ENCODE measurements at regions of chr13 and their contacts with region 1.

Region 1: DNA sequence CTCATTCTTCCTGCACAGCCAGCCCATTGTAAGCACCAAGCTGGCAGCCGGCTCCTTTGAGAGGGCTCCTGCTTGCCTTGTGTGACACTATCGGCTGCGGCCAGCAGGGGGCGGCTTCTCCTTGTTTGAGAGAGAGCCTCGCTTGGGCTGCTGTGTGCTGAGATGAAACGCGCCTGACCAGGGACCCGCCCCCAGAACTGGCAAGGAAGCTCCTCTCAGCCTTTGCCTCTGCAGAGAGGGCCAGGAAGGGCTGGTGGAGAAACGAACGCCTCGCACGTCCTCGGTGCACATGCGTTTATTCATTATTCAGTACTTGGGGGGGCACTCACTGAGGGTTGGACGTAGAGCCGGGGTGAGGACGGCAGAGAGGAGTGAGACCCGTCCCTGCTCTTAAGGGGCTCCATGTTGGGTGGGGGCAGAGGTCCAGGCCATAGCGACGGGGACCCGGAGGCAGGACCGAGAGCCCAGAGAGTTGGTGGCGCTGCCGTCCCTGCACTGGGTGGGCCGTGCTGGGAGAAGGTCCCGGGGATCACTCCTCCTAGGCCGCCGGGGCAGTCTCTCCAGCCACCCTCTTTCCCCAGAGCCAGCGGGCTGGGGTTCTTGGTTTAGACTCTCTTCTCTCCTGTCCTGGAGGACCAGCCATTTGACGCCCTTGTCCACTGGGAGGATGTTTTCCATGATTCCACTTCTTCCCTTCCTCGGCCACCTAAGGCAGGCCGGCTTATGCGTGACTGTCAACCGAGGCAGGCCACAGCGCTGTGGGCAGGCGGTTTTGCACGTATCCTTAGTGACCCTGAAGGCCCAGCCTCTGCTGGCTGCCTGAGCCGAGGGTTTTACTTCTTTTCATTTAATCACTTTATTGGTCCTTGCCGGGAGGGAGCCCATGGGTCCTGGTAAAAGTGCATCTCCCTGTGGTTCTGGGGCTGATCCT is 174.5 kb downstream of the KATNAL1 start:
- DNase-seq: peak; percentile 98
- H3K4me3 ChIP-seq: no peak overlapping the region
- H3K27ac ChIP-seq: peak overlapping the region; percentile 62
- H3K4me1 ChIP-seq: peaks cover 11% of the 10 kb centered on the region
- H3K27me3 ChIP-seq: no peaks in the 10 kb centered on the region
- CTCF ChIP-seq: peak; percentile 97

Region 2: GRCh38 chr13:30114571-30115256 is 18.2 kb before region 1 on chr13:
- CTCF ChIA-PET with region 1: interaction called, 11 read pairs
- POLR2A ChIA-PET with region 1: no interaction called
- intact Hi-C with region 1: no loop called
- DNase-seq: peak; percentile 91
- H3K4me3 ChIP-seq: peak overlapping the region; percentile 63
- H3K27ac ChIP-seq: peak overlapping the region; percentile 65
- H3K4me1 ChIP-seq: peaks cover 33% of the 10 kb centered on the region
- H3K27me3 ChIP-seq: no peaks in the 10 kb centered on the region
- CTCF ChIP-seq: peak; percentile 94

Region 3: GRCh38 chr13:30408319-30409101 is 275.6 kb after region 1 on chr13:
- CTCF ChIA-PET with region 1: interaction called, 11 read pairs
- POLR2A ChIA-PET with region 1: interaction called, 3 read pairs
- intact Hi-C with region 1: loop called (anchors 5 kb)
- DNase-seq: no peak
- H3K4me3 ChIP-seq: no peak overlapping the region
- H3K27ac ChIP-seq: peak overlapping the region; percentile 97
- H3K4me1 ChIP-seq: peaks cover 67% of the 10 kb centered on the region
- H3K27me3 ChIP-seq: no peaks in the 10 kb centered on the region
- CTCF ChIP-seq: no peak

Region 4: GRCh38 chr13:30453727-30454126 is 320.8 kb after region 1 on chr13:
- CTCF ChIA-PET with region 1: no interaction called
- POLR2A ChIA-PET with region 1: no interaction called
- intact Hi-C with region 1: loop called (anchors 2 kb)
- DNase-seq: peak; percentile 52
- H3K4me3 ChIP-seq: no peak overlapping the region
- H3K27ac ChIP-seq: no peak overlapping the region
- H3K4me1 ChIP-seq: peaks cover 13% of the 10 kb centered on the region
- H3K27me3 ChIP-seq: no peaks in the 10 kb centered on the region
- CTCF ChIP-seq: peak; percentile 38

Region 5: GRCh38 chr13:30572859-30573275 is 440.0 kb after region 1 on chr13:
- CTCF ChIA-PET with region 1: no interaction called
- POLR2A ChIA-PET with region 1: no interaction called
- intact Hi-C with region 1: loop called (anchors 5 kb)
- DNase-seq: peak; percentile 71
- H3K4me3 ChIP-seq: peak overlapping the region; percentile 38
- H3K27ac ChIP-seq: peak overlapping the region; percentile 83
- H3K4me1 ChIP-seq: peaks cover 48% of the 10 kb centered on the region
- H3K27me3 ChIP-seq: no peaks in the 10 kb centered on the region
- CTCF ChIP-seq: peak; percentile 54

Region 6: DNA sequence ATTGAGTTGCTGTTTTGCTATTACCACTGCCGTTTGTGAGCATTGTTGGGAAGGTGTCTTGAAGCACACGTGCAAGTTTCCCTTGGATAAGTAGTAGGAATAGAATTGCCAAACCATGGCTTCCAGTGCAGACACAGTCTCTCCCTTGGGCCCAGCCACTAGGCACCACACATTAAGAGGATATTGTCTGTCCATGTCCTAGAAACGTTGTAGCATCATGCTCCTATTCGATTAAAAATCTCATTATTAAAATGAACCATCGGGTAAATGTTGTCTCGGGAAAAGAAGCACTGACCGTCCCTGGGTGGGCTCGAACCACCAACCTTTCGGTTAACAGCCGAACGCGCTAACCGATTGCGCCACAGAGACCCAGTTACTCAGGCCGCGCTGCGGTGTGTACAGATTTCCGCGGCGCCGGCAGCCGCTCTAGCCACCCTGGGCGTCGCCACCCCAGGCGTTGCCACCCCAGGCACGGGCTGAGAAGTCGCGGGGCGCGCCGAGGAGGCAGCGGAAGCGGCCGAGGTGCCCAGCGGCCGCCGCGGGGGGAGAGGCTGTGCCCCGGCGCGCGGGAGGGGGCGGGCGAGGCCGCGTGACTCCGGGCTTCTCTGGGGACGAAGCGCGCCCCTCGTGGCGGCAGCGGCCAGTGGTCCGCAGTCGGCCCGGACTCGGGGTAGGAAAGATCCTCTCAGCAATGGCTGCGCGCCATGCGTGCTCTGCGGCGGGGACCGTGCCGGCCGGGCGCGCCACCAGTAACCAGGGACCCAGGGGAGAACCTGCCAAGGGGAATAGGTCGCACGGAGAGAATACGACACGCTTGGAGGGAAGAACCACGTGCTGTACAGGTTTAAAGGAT is 541.0 kb after region 1 on chr13:
- CTCF ChIA-PET with region 1: no interaction called
- POLR2A ChIA-PET with region 1: no interaction called
- intact Hi-C with region 1: loop called (anchors 10 kb)
- DNase-seq: peak; percentile 89
- H3K4me3 ChIP-seq: peak overlapping the region; percentile 54
- H3K27ac ChIP-seq: peak overlapping the region; percentile 63
- H3K4me1 ChIP-seq: no peaks in the 10 kb centered on the region
- H3K27me3 ChIP-seq: no peaks in the 10 kb centered on the region
- CTCF ChIP-seq: peak; percentile 60

Region 7: DNA sequence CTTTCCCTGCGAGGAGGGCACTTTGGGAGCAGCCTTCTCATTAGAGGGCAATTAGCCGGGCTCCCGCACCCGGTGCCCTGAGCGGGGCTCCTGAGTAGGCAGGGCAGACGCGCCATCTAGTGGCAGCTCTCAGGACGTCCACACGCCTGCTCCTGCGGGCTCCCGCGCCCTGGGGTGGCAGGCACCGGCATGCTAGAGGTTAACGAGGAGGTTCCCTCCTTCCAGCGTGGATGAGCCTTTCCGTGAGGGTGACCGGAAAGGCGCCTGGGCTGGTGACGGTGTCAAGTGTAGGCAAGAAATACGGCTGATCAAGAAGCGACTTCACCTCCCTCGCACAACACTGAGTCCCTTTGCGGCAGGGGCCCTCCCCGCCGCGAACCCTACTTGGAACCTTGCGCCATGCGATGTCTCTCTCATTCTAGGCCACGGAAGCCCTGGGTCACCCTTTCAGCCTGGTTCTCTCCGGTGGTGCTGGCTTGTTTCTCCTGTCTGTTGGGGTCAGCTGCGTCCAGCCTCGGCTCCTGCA is 670.1 kb after region 1 on chr13:
- CTCF ChIA-PET with region 1: interaction called, 3 read pairs
- POLR2A ChIA-PET with region 1: no interaction called
- intact Hi-C with region 1: loop called (anchors 2 kb)
- DNase-seq: peak; percentile 90
- H3K4me3 ChIP-seq: no peak overlapping the region
- H3K27ac ChIP-seq: no peak overlapping the region
- H3K4me1 ChIP-seq: peaks cover 24% of the 10 kb centered on the region
- H3K27me3 ChIP-seq: no peaks in the 10 kb centered on the region
- CTCF ChIP-seq: peak; percentile 98

Measured in A673 (cell line).